Left ventricle myocardium inferior (tissue), 1 donor: ENCODE measurements at regions of chr6 and their contacts with region 1.

Region 1: DNA sequence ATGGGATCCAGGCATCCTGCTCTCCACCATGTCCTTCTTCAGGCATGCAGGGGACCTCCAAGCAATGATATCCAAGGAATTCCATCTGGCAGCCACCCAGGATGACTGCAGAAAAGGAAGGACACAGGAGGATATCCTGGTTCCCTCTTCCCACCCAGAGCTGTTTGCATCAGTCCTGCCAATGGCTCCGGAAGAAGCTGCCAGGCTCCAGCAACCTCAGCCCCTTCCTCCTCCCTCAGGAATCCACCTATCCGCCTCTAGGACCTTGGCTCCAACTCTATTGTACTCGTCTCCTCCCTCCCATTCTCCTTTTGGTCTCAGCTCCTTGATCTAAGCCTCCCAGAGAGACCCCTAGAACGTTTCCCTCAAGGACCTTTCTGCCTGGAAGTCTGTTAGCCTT is 733 bp upstream of the PSORS1C2 start:
- DNase-seq: no peak
- H3K4me3 ChIP-seq: no peak overlapping the region
- H3K27ac ChIP-seq: peak overlapping the region; percentile 27
- H3K4me1 ChIP-seq: peaks cover 49% of the 10 kb centered on the region
- H3K27me3 ChIP-seq: no peaks in the 10 kb centered on the region
- CTCF ChIP-seq: no peak

Region 2: GRCh38 chr6:31197559-31198305 is 58.1 kb after region 1 on chr6:
- intact Hi-C with region 1: loop called (anchors 5 kb)
- DNase-seq: peak; percentile 91
- H3K4me3 ChIP-seq: peak overlapping the region; percentile 74
- H3K27ac ChIP-seq: peak overlapping the region; percentile 98
- H3K4me1 ChIP-seq: peaks cover 31% of the 10 kb centered on the region
- H3K27me3 ChIP-seq: no peaks in the 10 kb centered on the region
- CTCF ChIP-seq: no peak

Region 3: GRCh38 chr6:31366693-31367470 is 227.3 kb after region 1 on chr6:
- intact Hi-C with region 1: loop called (anchors 5 kb)
- DNase-seq: peak; percentile 88
- H3K4me3 ChIP-seq: peak overlapping the region; percentile 49
- H3K27ac ChIP-seq: no peak overlapping the region
- H3K4me1 ChIP-seq: peaks cover 3% of the 10 kb centered on the region
- H3K27me3 ChIP-seq: peaks cover 35% of the 10 kb centered on the region
- CTCF ChIP-seq: peak; percentile 95